ENCODE measurements at regions of chr3 and their contacts with region 1.

Region 1: DNA sequence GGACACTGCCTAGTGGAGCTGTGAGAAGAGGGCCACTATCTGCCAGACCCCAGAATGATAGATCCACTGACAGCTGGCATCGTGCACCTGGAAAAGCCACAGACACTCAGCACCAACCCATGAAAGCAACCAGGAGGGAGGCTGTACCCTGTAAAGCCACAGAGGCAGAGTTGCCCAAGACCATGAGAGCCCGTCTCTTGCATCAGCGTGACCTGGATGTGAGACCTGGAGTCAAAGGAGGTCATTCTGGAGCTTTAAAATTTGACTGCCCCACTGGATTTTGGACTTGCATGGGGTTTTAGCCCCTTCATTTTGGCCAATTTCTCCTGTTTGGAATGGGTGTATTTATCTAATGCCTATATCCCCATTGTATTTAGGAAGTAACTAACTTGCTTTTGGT is 83.5 kb upstream of the P3H2 start:
- DNase-seq: no peak

Region 2: DNA sequence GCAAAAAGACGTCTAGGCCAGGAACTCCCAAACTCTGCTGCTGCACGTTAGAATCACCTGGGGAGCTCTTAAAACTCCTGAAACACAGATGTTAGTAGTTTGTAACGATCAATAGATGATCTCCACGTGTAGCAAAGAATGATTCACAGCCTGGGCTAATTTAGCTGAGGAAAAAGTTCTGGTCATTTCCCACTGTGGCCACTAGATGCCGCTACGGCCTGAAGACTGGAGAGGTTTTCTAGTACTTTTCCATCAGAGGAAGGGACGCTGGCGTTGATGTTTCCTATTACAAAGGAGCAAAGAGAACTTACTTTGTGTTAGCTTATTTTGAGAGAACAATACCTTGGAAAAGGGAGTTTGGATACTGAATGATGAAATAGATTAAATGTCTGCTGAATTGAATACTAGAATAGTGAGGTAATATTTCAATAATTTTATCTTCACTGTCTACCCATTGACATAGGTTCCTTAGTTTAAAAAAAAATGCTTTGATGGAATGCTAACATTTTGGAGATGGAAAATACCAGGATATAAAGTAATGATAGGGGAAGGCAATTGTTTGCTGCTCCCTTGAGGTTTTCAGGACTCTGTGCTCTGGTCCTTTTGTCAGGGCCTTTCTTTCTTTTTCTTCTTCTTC is 242.6 kb before region 1 on chr3:
- intact Hi-C with region 1: loop called (anchors 5 kb)
- DNase-seq: peak; percentile 84

Region 3: DNA sequence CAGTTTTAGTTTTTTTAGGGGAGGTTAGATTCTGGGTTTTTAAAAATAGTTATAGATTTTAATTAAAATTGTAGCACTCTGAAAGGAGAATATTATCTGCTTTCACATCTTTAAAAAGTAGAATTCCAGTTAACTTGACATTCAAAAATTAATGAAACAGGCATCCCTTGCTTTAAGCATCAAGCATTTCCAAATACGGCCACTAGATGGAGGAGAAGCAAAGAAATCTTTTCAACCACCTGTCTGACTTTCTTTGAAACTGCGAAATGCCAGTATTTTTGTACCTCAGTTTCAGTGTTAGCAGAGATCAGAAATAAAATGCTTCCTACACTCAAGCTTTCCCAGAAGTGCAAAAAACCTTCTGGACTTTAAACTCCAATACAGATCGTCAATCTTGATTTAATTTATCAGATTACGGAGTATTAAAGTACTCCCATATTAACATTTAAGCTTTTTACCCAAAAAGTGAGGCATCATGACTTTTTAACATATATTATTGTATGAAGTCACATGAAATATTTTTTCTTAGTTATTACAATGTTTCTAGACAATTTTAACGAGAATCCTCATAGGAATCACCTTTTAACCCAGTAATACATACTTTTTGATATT is 236.8 kb before region 1 on chr3:
- intact Hi-C with region 1: loop called (anchors 5 kb)
- DNase-seq: no peak

Region 4: GRCh38 chr3:190131329-190131728 is 72.9 kb before region 1 on chr3:
- intact Hi-C with region 1: no loop called
- DNase-seq: no peak

Measured in posterior vena cava (tissue), 2 donors.